Transverse colon (tissue), 4 donors: ENCODE measurements at regions of chr9 and their contacts with region 1.

Region 1: GRCh38 chr9:113401027-113401792 is at the start of gene ALAD:
- DNase-seq: peak; percentile 100
- H3K4me3 ChIP-seq: peak within 1 kb of the TSS; percentile 58 to 89 (median 79)
- H3K27ac ChIP-seq: peak within 1 kb of the TSS; percentile 73 to 87 (median 80)
- H3K4me1 ChIP-seq: peaks cover 4 to 46% (median 36%) of the 10 kb centered on the region in 4 donors
- H3K27me3 ChIP-seq: no peaks in the 10 kb centered on the region
- CTCF ChIP-seq: peak; percentile 86 to 98 (median 94)
- EP300 ChIP-seq: no peak
- POLR2A ChIP-seq: peak; percentile 64
- total RNA-seq, gene ALAD: 18.5 to 107 (median 63.0) TPM

Region 2: DNA sequence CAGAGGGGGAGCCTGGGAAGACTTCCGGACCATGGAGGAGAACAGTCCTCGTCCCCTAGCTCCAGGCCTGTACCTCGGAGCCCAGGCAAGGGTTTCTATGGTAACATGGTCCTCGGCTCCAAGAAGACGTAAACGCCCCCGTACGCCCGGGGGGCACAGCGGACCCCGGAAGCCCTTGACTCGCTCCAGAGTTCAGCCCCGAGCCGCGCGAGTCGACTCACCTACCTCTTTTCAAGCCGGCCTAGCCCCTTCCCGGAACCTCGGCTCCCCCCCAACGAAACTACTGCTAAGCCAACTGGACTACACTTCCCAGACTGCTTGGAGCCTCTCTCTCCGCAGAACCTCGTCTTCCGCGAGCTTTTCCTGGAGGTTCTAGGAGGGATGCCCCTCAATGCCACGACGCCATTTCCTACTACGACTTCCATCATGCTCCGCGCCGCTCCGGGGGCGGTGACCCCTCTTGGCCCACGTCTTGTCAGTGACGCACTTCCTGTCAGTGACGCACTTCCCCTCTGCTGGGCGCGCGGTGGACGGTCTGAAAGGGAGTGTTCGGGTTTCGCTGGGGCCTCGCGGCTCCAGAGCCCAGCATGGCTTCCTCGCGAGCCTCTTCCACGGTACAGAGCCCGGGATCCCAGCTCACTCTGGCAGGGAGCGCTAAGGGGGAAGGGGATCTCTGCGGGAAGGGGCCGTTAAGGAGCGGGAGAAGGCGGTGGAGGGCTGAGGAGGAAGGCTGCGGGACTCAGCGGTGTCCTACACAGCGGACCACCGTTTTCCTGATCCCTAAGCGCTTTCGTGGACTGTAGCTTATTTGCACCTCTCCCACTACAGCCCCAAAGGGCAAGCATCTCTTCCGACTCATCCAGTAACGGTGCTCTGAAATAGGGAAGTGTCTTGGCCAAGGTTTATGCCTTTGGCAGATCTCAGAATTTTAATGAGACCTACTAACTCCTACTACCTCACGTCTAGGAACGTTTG is 125.8 kb before region 1 on chr9 and contains the starts of genes CDC26 and PRPF4:
- in situ Hi-C with region 1: loop called in 3 of 4 experiments (anchors 10 kb)
- intact Hi-C with region 1: no loop called
- DNase-seq: peak; percentile 98
- H3K4me3 ChIP-seq: peak within 1 kb of the TSS; percentile 51 to 85 (median 61)
- H3K27ac ChIP-seq: peak within 1 kb of the TSS; percentile 88 to 94 (median 90)
- H3K4me1 ChIP-seq: peaks cover 7 to 33% (median 12%) of the 10 kb centered on the region in 4 donors
- H3K27me3 ChIP-seq: no peaks in the 10 kb centered on the region
- CTCF ChIP-seq: no peak
- EP300 ChIP-seq: peak; percentile 26
- POLR2A ChIP-seq: peak; percentile 97
- total RNA-seq, gene CDC26: 15.7 to 43.8 (median 30.8) TPM
- total RNA-seq, gene PRPF4: 5.0 to 13.7 (median 9.6) TPM

Region 3: DNA sequence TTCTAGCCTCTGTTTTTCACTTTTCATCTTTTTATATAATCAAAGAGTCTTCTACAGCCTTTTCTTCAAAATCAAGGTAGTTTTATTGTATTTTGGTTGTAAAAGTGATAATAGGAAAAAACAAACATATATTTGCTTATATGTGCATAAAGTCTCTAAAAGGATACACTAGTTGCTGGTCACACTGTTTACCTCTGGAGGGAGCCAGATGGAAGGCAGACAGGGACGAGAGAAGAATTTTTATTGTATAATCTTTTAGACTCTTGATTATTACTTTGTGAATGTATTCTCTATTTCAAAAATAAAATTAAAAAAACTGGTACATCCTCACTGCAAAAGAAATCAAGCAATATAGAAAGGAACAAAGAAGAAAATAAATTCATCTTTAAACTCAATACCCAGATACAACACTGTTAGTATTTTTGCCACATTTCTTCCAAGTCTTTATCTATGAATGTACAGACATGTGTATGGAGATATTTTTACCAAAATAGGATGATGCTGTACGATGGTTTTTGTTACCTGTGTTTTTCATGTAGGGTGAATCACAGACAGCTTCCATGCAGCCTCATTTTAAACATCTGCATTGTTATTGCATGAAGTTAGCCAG is 91.9 kb before region 1 on chr9:
- in situ Hi-C with region 1: loop called in 2 of 4 experiments (anchors 10 kb)
- intact Hi-C with region 1: no loop called
- DNase-seq: peak; percentile 41
- H3K4me3 ChIP-seq: no peak overlapping the region
- H3K27ac ChIP-seq: no peak overlapping the region
- H3K4me1 ChIP-seq: no peaks in the 10 kb centered on the region
- H3K27me3 ChIP-seq: no peaks in the 10 kb centered on the region
- CTCF ChIP-seq: peak; percentile 61 to 74 (median 68)
- EP300 ChIP-seq: no peak
- POLR2A ChIP-seq: no peak

Region 4: DNA sequence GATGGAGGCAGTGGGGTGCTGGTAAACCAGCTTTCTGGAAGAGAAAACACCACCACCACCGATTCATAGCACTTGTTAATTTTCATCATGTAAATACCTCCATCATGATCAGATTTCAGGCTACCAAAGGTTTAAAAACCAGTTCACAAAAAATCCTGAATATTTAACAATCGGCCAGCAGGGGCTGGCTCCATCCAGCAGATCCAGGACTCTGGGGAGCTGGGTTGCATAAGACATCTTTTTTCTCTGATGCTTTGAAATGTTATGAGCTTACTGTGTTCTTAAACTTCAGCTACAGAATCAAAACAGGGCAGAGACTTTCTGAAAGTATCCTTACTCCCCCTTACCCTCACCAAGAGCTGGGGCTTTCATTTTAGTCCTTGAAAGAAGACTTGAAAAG is 83.4 kb before region 1 on chr9:
- in situ Hi-C with region 1: loop called in 1 of 4 experiments (anchors 10 kb)
- intact Hi-C with region 1: no loop called
- DNase-seq: no peak
- H3K4me3 ChIP-seq: no peak overlapping the region
- H3K27ac ChIP-seq: no peak overlapping the region
- H3K4me1 ChIP-seq: no peaks in the 10 kb centered on the region
- H3K27me3 ChIP-seq: no peaks in the 10 kb centered on the region
- CTCF ChIP-seq: peak in 1 of 5 experiments; percentile 6
- EP300 ChIP-seq: no peak
- POLR2A ChIP-seq: no peak

Region 5: DNA sequence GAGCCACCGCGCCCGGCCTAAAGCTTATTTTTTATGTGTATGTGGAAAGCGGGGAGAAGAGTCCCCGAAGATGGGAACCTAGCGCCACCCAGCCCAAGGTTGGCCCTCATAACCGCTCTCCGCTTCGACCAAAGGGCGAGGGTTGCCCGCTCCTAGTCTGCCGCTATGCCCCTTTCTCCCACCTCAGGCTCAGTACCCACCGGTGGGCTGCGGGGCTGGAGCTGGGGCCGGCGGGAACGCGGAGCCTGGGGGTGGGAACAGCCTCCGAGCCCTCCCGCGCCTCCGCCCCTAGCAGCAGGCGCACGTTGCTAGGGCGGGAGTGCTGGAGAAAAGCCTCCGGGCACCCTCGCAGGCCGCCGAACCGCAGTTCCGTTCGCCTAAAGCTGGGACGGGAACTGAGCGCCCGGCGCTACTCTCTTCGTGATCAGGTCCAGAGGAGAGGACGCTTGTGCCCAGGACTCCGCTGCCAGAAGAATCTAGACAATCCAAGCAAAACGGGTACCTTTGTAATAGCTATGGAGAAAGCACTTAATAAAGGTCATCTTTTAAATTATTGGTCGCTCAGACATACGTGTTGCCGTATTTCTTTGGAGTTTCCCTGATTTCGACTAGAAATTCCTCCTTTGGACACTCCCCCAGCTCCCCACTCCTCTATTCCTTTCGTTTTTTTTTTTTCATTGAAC is 61.1 kb before region 1 on chr9 and contains the start of gene WDR31:
- in situ Hi-C with region 1: no loop called
- intact Hi-C with region 1: loop called (anchors 10 kb)
- DNase-seq: peak; percentile 89
- H3K4me3 ChIP-seq: peak within 1 kb of the TSS; percentile 26 to 75 (median 67)
- H3K27ac ChIP-seq: peak within 1 kb of the TSS; percentile 74 to 87 (median 80)
- H3K4me1 ChIP-seq: peaks cover 10 to 34% (median 23%) of the 10 kb centered on the region in 4 donors
- H3K27me3 ChIP-seq: no peaks in the 10 kb centered on the region
- CTCF ChIP-seq: no peak
- EP300 ChIP-seq: no peak
- POLR2A ChIP-seq: peak; percentile 25
- total RNA-seq, gene WDR31: 0.60 to 3.0 (median 1.6) TPM

Region 6: GRCh38 chr9:113753398-113754119 is 352.3 kb after region 1 on chr9:
- in situ Hi-C with region 1: no loop called
- intact Hi-C with region 1: no loop called
- DNase-seq: no peak
- H3K4me3 ChIP-seq: no peak overlapping the region
- H3K27ac ChIP-seq: no peak overlapping the region
- H3K4me1 ChIP-seq: peaks cover 0 to 4% (median 0%) of the 10 kb centered on the region in 4 donors
- H3K27me3 ChIP-seq: peaks cover 15% of the 10 kb centered on the region
- CTCF ChIP-seq: no peak
- EP300 ChIP-seq: no peak
- POLR2A ChIP-seq: no peak